Aorta (tissue), 5 donors: ENCODE measurements at regions of chr22 and their contacts with region 1.

Region 1: DNA sequence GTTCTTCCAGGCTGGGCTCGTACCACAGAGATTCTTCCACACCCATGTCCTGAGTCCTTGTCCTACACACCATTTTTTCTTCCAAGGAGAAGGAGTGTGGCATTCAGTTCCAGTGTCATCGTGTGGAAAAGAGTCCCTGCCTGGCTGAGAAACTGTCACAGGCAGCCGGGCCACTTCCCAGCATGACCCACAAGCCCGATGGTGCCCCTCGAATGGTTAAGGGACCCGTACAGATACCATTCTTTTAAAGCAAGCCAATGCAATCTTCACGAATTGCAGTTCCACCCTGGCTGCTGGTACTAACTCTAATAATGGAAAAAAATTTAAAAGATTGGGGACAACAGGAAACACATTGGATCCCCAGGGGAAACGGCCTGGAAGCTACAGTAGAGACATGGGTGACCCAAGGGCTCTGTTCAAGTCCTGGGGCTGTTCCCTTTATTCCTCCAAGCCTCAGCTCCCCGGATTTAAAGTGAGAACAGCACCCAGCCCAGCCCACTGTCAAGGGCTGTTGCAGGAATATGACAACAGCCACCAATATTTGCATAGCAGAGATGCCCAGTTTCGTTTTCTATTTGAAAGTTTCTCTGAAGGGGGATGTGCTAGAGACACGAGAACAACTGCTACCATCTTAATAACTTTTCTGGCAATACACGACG is 80.9 kb upstream of the WNT7B start:
- DNase-seq: peak in 1 of 2 donors; percentile 76
- ATAC-seq: peak; percentile 17
- H3K4me3 ChIP-seq: peak overlapping the region; percentile 2 to 37
- H3K27ac ChIP-seq: peak overlapping the region; percentile 61 to 85
- H3K4me1 ChIP-seq: peaks cover 0 to 2% of the 10 kb centered on the region in 2 donors
- H3K27me3 ChIP-seq: no peaks in the 10 kb centered on the region

Region 2: DNA sequence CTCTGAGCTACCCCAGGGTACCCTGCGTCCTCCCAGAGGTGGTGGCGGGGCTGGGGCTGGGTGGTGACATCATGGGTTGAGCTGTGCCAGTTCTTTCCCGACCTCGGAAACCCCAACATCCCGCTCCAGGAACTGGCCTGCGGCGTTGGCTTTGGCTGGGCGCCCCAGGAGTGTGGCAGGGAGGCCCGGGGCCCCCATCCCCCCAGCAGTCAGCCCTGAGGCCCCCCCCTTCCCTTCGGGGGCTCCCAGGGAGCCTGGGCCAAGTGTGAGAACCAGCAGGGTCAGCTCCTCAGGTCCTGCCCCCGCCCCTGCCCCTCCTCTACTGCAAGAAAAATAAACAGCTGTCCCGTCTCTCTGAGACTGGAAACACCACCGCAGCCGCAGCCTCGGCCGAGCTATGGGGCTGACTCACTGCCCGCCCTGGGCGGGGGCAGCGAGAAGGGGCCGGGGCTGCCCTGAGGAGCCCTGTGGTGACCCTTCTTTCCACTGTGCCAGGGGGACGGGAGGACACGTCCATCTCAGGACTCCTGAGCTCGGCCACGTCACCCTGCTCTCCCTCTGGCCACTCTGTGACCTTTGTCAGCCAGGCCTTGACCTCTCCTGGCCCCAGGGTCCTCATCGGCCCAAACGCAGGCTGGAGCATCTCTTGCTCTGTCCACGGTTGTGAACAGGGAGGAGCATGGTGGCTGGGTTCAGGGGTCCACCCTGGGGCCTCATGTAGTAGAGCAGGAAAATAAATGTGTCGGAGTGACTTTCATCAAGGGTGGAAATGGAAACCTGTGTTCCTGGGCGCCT is 154.3 kb before region 1 on chr22:
- intact Hi-C with region 1: no loop called
- DNase-seq: peak; percentile 70 to 85
- ATAC-seq: peak; percentile 65
- H3K4me3 ChIP-seq: no peak overlapping the region
- H3K27ac ChIP-seq: no peak overlapping the region
- H3K4me1 ChIP-seq: no peaks in the 10 kb centered on the region
- H3K27me3 ChIP-seq: no peaks in the 10 kb centered on the region

Region 3: GRCh38 chr22:46013460-46014416 is 44.2 kb before region 1 on chr22:
- intact Hi-C with region 1: loop called in 1 of 2 experiments (anchors 5 kb)
- DNase-seq: peak; percentile 98 to 99
- ATAC-seq: peak; percentile 96
- H3K4me3 ChIP-seq: peak overlapping the region in 1 of 2 donors; percentile 46
- H3K27ac ChIP-seq: peak overlapping the region; percentile 90 to 97
- H3K4me1 ChIP-seq: no peaks in the 10 kb centered on the region
- H3K27me3 ChIP-seq: no peaks in the 10 kb centered on the region

Region 4: GRCh38 chr22:46071451-46072109 is 13.7 kb after region 1 on chr22:
- intact Hi-C with region 1: loop called in 1 of 2 experiments (anchors 1 kb)
- DNase-seq: peak; percentile 95
- ATAC-seq: peak; percentile 48
- H3K4me3 ChIP-seq: peak overlapping the region; percentile 63 to 95
- H3K27ac ChIP-seq: peak overlapping the region; percentile 95 to 98
- H3K4me1 ChIP-seq: peaks cover 0 to 3% of the 10 kb centered on the region in 2 donors
- H3K27me3 ChIP-seq: no peaks in the 10 kb centered on the region